K562 (cell line): ENCODE measurements at regions of chr15 and their contacts with region 1.

Region 1: GRCh38 chr15:69058830-69059556 is 44.5 kb downstream of the NOX5 start:
- DNase-seq: peak; percentile 84 to 89 (median 88)
- ATAC-seq: peak; percentile 93
- H3K4me3 ChIP-seq: no peak overlapping the region
- H3K27ac ChIP-seq: no peak overlapping the region
- H3K4me1 ChIP-seq: peaks cover 0 to 2% of the 10 kb centered on the region in 2 experiments; a peak in 2 of 5 replicates
- H3K27me3 ChIP-seq: peaks cover 0 to 27% of the 10 kb centered on the region in 2 experiments; a peak in 3 of 5 replicates
- CTCF ChIP-seq: peak; percentile 90 to 93 (median 90)
- EP300 ChIP-seq: no peak
- POLR2A ChIP-seq: no peak
- RAD21 ChIP-seq: peak; percentile 97 to 98

Region 2: DNA sequence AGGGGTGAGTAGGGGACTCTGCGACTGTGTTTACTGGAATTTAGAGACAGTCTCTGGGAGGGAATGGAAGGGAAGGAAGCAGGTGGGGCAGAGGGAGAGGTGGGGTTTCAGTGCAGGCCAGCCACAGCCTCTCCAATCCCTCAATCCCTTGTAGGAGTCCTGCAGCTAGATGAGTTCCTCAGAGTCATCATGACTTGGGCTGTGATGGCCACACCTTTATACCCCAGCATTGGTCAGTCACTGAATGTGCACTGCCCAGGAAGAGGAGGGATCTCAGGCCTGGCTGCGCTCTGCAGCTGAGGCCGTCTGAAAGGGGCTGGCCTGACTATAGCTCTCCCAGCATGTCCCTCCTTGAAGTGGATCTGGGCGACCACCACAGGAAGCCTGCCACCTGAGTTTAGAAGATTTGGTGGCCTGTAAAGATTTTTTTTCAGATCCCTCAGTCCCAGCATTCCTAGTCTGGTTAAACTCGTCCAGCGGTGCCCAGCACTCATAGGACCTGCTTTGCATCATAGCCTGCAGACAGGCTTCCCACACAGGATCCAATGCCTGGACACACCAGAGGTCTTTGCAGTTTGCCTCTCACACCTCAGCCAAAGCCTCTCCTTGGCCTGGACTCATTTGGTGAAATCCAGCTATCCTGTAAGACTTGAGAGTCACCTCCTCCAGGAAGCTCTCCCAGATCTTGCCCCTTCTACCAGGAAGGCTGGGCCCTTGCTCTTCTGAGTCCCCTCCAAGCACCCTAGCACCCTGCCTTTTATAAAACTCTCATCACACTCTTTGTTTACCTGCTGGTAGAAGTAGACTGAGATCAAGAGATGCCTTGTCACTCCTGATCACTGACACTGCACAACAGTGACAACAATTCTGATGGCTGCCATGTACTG is 34.4 kb after region 1 on chr15:
- CTCF ChIA-PET with region 1: no interaction called
- POLR2A ChIA-PET with region 1: no interaction called
- in situ Hi-C with region 1: no loop called
- intact Hi-C with region 1: no loop called
- DNase-seq: peak; percentile 45 to 67 (median 60)
- ATAC-seq: peak; percentile 99
- H3K4me3 ChIP-seq: no peak overlapping the region
- H3K27ac ChIP-seq: no peak overlapping the region; the same call in 2 of the 3 replicates
- H3K4me1 ChIP-seq: peaks cover 0 to 16% of the 10 kb centered on the region in 2 experiments; a peak in 2 of 5 replicates
- H3K27me3 ChIP-seq: peaks cover 3 to 7% of the 10 kb centered on the region in 2 experiments; a peak in 3 of 5 replicates
- CTCF ChIP-seq: no peak
- EP300 ChIP-seq: no peak
- POLR2A ChIP-seq: no peak
- RAD21 ChIP-seq: peak in 1 of 2 experiments; percentile 10; a peak in 1 of 4 replicates

Region 3: GRCh38 chr15:69117431-69117871 is 58.5 kb after region 1 on chr15:
- CTCF ChIA-PET with region 1: no interaction called
- POLR2A ChIA-PET with region 1: no interaction called
- in situ Hi-C with region 1: no loop called
- intact Hi-C with region 1: no loop called
- DNase-seq: peak in 2 of 4 experiments; percentile 8 to 11
- ATAC-seq: peak; percentile 38; the same call in 1 of the 3 replicates
- H3K4me3 ChIP-seq: no peak overlapping the region
- H3K27ac ChIP-seq: no peak overlapping the region
- H3K4me1 ChIP-seq: peaks cover 2 to 20% of the 10 kb centered on the region in 2 experiments; a peak in 3 of 5 replicates
- H3K27me3 ChIP-seq: peaks cover 26 to 46% of the 10 kb centered on the region in 2 experiments
- CTCF ChIP-seq: no peak
- EP300 ChIP-seq: no peak
- POLR2A ChIP-seq: no peak
- RAD21 ChIP-seq: no peak

Region 4: GRCh38 chr15:69225355-69226025 is 166.5 kb after region 1 on chr15:
- CTCF ChIA-PET with region 1: interaction called, 20 read pairs
- POLR2A ChIA-PET with region 1: no interaction called
- in situ Hi-C with region 1: loop called (anchors 5 kb)
- intact Hi-C with region 1: loop called (anchors 1 kb)
- DNase-seq: peak in 2 of 4 experiments; percentile 7 to 9
- ATAC-seq: no peak
- H3K4me3 ChIP-seq: no peak overlapping the region
- H3K27ac ChIP-seq: no peak overlapping the region
- H3K4me1 ChIP-seq: no peaks in the 10 kb centered on the region
- H3K27me3 ChIP-seq: peaks cover 0 to 5% of the 10 kb centered on the region in 2 experiments; a peak in 1 of 5 replicates
- CTCF ChIP-seq: peak in 2 of 3 experiments; percentile 12 to 59; a peak in 3 of 6 replicates
- EP300 ChIP-seq: no peak
- POLR2A ChIP-seq: no peak
- RAD21 ChIP-seq: peak; percentile 74 to 87

Region 5: DNA sequence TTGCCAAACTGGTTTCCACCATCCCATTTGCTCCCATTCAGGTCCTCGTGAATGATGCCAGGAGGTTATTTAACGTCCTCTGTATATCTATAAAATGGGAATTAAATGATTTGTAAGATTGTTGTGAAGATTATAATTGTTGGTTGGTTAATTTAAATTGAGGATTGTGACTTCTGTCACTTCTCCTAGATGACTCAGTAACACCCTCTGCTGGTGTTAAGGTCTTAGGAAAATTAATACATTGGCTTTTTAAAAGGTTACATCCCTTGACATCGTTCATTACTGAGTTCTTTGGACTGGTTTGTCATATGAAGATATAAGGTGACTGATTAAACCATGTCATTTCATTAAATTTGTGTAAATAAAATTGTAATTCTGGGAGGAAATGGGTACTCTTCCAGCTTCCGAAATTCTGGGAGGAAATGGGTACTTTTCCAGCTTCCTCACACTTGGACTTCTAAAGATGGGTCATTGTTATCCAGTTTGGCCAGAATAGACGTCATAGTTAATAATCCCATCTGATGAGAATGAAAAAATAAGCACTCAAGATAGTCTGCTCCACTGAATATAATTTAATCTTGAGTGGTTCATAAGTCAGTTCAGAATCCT is 206.5 kb after region 1 on chr15:
- CTCF ChIA-PET with region 1: interaction called, 7 read pairs
- POLR2A ChIA-PET with region 1: no interaction called
- in situ Hi-C with region 1: no loop called
- intact Hi-C with region 1: loop called (anchors 2 kb)
- DNase-seq: peak in 1 of 4 experiments; percentile 27
- ATAC-seq: no peak
- H3K4me3 ChIP-seq: no peak overlapping the region
- H3K27ac ChIP-seq: no peak overlapping the region
- H3K4me1 ChIP-seq: no peaks in the 10 kb centered on the region
- H3K27me3 ChIP-seq: peaks cover 0 to 4% of the 10 kb centered on the region in 2 experiments; a peak in 1 of 5 replicates
- CTCF ChIP-seq: peak; percentile 25 to 67 (median 32); a peak in 3 of 6 replicates
- EP300 ChIP-seq: no peak
- POLR2A ChIP-seq: no peak
- RAD21 ChIP-seq: peak; percentile 70 to 77

Region 6: DNA sequence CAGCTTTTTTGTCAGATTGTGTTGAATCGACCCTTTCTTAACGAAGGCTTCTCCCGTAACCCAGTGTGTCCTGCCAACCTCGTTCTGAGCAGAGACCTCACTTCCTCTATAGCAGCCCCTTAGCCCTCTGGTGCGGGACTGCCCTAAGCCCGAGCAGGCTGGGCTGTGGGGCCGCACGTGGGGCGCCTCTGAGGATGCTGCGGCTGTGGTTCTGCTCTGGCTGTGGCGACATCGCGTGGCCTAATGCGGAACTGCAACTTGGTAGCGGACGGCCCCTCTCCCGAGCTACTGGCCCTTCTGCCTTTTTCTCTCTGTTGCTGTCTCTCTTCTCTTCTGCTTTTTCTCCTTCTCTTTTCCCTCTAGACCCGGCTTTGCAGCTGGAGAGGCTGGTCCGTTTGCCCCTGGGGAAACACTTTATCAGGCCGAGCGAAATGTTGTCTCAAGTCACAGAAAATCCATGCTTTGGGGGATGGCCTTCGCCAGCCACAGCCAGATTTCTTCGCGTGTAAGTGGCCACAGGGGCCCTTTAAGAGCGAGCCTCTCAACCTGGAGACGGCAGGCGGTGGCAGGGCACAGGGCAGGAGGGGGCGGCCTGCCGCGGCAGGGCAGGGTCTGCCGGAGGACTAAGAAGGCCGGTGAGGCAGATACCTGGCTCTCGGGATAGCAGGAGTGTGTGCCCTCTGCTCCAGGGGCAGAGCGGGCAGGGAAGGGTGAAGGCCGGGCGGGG is 335.7 kb after region 1 on chr15:
- CTCF ChIA-PET with region 1: interaction called, 8 read pairs
- POLR2A ChIA-PET with region 1: interaction called, 4 read pairs
- in situ Hi-C with region 1: no loop called
- intact Hi-C with region 1: loop called (anchors 2 kb)
- DNase-seq: peak; percentile 81 to 91 (median 86)
- ATAC-seq: peak; percentile 96
- H3K4me3 ChIP-seq: no peak overlapping the region
- H3K27ac ChIP-seq: no peak overlapping the region
- H3K4me1 ChIP-seq: peaks cover 0 to 8% of the 10 kb centered on the region in 2 experiments; a peak in 3 of 5 replicates
- H3K27me3 ChIP-seq: peaks cover 9 to 61% of the 10 kb centered on the region in 2 experiments; a peak in 4 of 5 replicates
- CTCF ChIP-seq: peak; percentile 87 to 90 (median 88)
- EP300 ChIP-seq: no peak
- POLR2A ChIP-seq: no peak
- RAD21 ChIP-seq: peak; percentile 77 to 86

Region 7: DNA sequence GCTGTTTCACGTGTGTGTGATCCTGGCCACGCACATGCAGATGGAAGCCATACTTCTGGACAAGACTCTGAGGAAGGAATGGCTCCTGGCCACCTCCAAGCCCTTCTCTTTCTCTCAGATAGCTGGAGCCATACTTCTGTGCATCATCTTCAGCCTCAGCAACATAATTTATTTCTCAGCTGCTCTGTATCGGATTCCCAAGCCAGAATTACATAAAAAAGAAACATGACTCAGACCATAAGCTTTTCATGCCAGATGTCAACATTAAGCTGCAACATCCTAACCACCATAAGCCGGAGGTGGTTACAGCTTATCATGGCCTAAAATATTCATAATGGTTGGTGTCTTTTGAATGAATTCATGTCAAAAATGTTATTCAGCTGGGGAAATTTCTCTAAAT is 344.6 kb after region 1 on chr15:
- CTCF ChIA-PET with region 1: no interaction called
- POLR2A ChIA-PET with region 1: interaction called, 4 read pairs
- in situ Hi-C with region 1: loop called (anchors 5 kb)
- intact Hi-C with region 1: no loop called
- DNase-seq: no peak
- ATAC-seq: no peak
- H3K4me3 ChIP-seq: no peak overlapping the region
- H3K27ac ChIP-seq: no peak overlapping the region
- H3K4me1 ChIP-seq: no peaks in the 10 kb centered on the region; a peak in 1 of 5 replicates
- H3K27me3 ChIP-seq: peaks cover 0 to 16% of the 10 kb centered on the region in 2 experiments; a peak in 1 of 5 replicates
- CTCF ChIP-seq: no peak
- EP300 ChIP-seq: no peak
- POLR2A ChIP-seq: no peak
- RAD21 ChIP-seq: no peak

Region 8: DNA sequence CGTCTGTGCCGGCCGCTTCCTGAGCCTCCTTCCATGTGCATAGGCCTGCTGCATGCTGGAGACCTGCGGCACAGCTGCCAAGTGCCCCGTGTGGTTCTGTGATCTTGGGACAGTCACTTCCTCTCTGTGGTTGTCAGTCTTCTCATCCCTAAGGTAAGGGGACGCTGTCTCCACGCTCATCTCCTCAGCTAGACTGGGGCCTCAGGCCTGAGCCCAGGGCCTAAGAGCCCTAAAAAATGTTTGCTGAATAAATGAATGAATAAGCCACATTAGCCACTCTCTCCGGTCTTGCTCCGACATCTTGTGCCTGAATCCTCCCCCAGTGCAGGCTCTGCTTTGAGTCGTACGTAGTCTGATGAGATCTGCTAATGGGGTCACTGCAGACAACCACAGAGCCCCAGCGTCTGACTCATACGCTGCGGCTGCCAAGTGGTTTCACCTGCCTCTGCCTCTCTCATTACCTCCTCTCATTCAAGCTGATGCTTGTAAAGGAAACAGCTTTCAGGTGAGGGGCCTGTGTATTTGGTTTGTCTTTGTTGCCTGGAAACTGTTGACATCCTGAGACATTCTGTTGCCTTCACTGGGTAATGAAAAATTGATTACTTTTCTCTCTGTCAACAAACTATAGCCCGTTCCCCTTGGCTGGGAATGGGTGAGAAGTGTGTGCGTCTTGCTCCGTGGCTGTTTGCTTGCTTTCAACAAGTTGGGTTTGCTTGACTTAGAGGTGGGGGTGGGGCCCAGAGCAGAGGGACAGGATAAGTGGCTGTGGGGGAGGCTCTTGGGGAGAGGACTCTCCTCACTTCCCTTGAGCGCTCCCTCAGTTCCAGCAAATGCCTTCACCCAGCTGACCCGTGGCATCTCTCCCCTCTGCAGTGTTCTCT is 409.5 kb after region 1 on chr15:
- CTCF ChIA-PET with region 1: interaction called, 3 read pairs
- POLR2A ChIA-PET with region 1: no interaction called
- in situ Hi-C with region 1: no loop called
- intact Hi-C with region 1: loop called (anchors 5 kb)
- DNase-seq: peak; percentile 54 to 73 (median 59)
- ATAC-seq: peak; percentile 75
- H3K4me3 ChIP-seq: no peak overlapping the region
- H3K27ac ChIP-seq: no peak overlapping the region
- H3K4me1 ChIP-seq: peaks cover 21 to 25% of the 10 kb centered on the region in 2 experiments; a peak in 4 of 5 replicates
- H3K27me3 ChIP-seq: peaks cover 0 to 9% of the 10 kb centered on the region in 2 experiments; a peak in 2 of 5 replicates
- CTCF ChIP-seq: no peak
- EP300 ChIP-seq: no peak
- POLR2A ChIP-seq: no peak
- RAD21 ChIP-seq: no peak